Dorsolateral prefrontal cortex (tissue), 120 donors: ENCODE measurements at regions of chr11 and their contacts with region 1.

Region 1: GRCh38 chr11:62337303-62338181 is at the start of gene ASRGL1:
- DNase-seq: peak; percentile 83 to 94 (median 90)
- H3K4me3 ChIP-seq: peak within 1 kb of the TSS; percentile 63 to 97 (median 86)
- H3K27ac ChIP-seq: peak within 1 kb of the TSS; percentile 9 to 95 (median 88)
- H3K27me3 ChIP-seq: no peaks in the 10 kb centered on the region
- CTCF ChIP-seq: peak in 41 of 56 donors; percentile 6 to 62 (median 33)
- total RNA-seq, gene ASRGL1: 53.3 to 207 (median 76.0) TPM

Region 2: DNA sequence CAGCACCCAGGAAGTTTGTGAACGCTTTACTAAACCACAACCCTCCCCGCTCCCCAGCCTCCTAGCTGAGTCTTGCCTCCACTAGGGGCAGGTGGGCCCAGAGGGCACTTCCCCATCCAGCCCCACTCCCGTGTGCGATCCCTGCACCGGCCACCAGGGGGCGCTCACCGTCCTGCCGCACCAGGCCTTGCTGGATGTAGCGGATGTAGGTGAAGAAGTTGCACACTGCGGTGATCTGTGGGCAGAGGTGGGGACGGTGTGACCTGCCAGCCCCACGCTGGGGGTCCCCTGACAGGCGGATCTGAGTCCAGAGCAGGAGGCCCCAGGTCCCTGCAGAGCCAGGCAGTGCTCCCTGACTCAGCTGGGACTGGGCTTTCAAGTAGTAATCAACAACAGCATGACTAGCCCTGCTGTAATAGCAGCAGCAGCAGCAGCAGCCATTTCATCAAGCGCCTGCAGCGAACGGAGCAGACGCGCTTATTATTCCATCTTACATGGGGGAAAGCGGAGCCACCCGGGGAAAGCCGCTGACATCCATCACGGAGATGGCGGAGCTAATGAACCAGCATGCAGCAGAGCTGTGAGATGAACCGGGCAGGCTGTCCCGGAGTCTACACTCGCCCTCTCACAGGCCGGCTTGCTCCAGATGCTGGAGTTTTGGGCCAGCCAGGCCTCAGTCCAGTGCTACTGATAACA is 438.2 kb before region 1 on chr11:
- intact Hi-C with region 1: loop called in 1 of 2 experiments (anchors 10 kb)
- DNase-seq: peak; percentile 53 to 85 (median 72)
- H3K4me3 ChIP-seq: no peak overlapping the region
- H3K27ac ChIP-seq: peak overlapping the region in 50 of 59 donors; percentile 1 to 84 (median 56)
- H3K27me3 ChIP-seq: no peaks in the 10 kb centered on the region
- CTCF ChIP-seq: peak; percentile 99 to 100 (median 100)

Region 3: DNA sequence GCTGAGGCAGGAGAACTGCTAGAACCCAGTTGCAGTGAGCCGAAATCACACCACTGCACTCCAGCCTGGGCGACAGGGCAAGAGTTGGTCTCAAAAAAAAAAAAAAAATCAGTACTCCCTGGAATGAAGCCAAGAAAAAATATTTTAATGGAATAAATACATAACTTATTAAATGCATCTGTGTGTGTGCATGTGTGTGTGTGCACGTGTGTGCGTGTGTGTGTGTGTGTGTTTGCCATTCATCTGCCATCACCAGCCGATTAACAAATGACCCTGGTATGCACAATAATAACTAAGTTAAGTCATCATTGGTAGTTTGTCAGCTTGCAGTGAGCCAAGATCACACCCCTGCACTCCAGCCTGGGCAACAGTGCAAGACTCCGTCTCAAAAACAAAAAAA is 46.3 kb after region 1 on chr11:
- intact Hi-C with region 1: loop called (anchors 1 to 2 kb)
- DNase-seq: no peak
- H3K4me3 ChIP-seq: no peak overlapping the region
- H3K27ac ChIP-seq: no peak overlapping the region
- H3K27me3 ChIP-seq: no peaks in the 10 kb centered on the region
- CTCF ChIP-seq: no peak